ENCODE measurements at regions of chr9 and their contacts with region 1.

Region 1: DNA sequence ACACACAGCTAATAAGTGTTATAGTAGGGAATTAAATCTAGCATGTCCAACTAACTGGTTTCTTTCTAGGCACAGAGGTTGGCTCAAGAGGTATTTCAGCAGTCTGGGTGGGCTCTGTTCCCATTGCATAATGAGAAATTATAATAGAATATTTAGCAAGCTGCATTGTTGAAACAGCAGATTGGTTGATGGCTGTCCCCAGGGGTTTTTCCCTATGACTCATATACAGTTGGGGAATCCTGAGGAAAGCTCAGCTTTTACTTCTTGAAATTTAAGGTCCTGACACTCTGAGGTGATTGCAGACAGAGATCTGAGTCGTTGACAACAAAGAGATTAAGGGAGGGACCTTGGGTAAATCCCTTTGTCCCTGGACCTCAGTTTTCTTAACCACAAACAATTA is 38.3 kb upstream of the TNFSF8 start:
- DNase-seq: peak; percentile 45
- ATAC-seq: peak; percentile 60
- H3K4me3 ChIP-seq: no peak overlapping the region
- H3K27ac ChIP-seq: no peak overlapping the region
- H3K4me1 ChIP-seq: peaks cover 12% of the 10 kb centered on the region
- H3K27me3 ChIP-seq: no peaks in the 10 kb centered on the region
- CTCF ChIP-seq: no peak

Region 2: GRCh38 chr9:114291064-114291474 is 677.6 kb before region 1 on chr9:
- CTCF ChIA-PET with region 1: no interaction called
- POLR2A ChIA-PET with region 1: no interaction called
- intact Hi-C with region 1: no loop called
- DNase-seq: peak; percentile 75
- ATAC-seq: peak; percentile 64
- H3K4me3 ChIP-seq: no peak overlapping the region
- H3K27ac ChIP-seq: no peak overlapping the region
- H3K4me1 ChIP-seq: no peaks in the 10 kb centered on the region
- H3K27me3 ChIP-seq: no peaks in the 10 kb centered on the region
- CTCF ChIP-seq: peak; percentile 85

Region 3: GRCh38 chr9:115104908-115105307 is 136.2 kb after region 1 on chr9:
- CTCF ChIA-PET with region 1: no interaction called
- POLR2A ChIA-PET with region 1: no interaction called
- intact Hi-C with region 1: no loop called
- DNase-seq: peak; percentile 63
- ATAC-seq: peak; percentile 49
- H3K4me3 ChIP-seq: peak overlapping the region; percentile 40; the same call in 1 of the 2 replicates
- H3K27ac ChIP-seq: peak overlapping the region; percentile 97
- H3K4me1 ChIP-seq: peaks cover 50% of the 10 kb centered on the region
- H3K27me3 ChIP-seq: no peaks in the 10 kb centered on the region
- CTCF ChIP-seq: no peak

Region 4: DNA sequence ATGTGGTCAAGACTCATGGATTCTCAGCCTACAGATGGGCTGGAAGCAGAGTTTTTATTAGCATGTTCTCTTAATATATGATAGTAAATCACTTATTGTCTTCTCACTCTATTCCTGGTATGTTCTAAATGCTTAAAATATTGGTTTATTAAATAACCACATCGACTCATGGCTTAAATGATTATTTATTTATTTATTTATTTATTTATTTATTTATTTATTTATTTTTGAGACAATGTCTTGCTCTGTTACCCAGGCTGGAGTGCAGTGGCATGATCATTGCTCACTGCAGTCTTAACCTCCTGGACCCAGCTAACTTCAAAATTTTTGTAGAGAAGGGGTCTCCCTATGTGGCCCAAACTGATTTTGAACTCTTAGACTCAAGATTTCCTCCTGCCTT is 606.5 kb after region 1 on chr9:
- CTCF ChIA-PET with region 1: no interaction called
- POLR2A ChIA-PET with region 1: interaction called, 10 read pairs
- intact Hi-C with region 1: no loop called
- DNase-seq: no peak
- ATAC-seq: no peak
- H3K4me3 ChIP-seq: no peak overlapping the region
- H3K27ac ChIP-seq: no peak overlapping the region
- H3K4me1 ChIP-seq: no peaks in the 10 kb centered on the region
- H3K27me3 ChIP-seq: no peaks in the 10 kb centered on the region
- CTCF ChIP-seq: no peak